Esophagus muscularis mucosa (tissue), 4 donors: ENCODE measurements at regions of chr5 and their contacts with region 1.

Region 1: DNA sequence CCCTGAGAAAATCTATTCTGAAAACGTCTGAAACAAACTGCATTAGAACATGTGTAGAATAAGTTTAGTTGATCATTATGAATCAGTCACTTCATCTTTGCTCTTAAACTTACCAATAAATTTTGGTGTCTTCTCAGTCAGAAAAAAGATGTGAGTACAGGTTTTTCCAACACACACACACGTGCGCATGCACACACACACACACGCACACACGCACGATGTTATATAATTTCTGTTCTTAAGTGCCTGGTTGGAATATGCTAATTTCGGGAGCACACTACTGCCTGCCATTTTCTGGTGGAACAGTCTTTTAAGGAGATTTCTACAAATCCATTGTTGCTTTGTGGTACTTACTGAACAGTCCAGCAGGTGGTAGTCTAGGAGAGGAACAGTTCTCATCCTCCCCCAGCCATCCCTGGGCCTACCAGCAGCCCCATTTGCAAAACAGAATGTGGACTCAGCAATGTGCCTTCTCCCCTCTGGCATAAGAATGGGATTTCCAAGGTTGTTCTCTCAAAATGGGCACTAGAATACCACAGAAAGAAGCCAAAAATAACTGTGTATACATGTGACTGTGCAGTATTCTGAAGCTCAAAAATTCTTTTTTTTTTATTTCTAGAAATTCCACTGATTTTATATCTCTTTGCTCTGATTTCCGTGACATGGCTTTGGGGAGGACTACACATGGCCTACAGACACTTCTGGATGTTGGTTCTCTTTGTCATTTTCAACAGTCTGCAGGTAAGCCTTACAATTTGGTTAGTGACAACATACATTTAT is 281.3 kb downstream of the ARRDC3 start:
- DNase-seq: no peak
- H3K4me3 ChIP-seq: no peak overlapping the region
- H3K27ac ChIP-seq: no peak overlapping the region
- H3K4me1 ChIP-seq: peaks cover 0 to 32% (median 25%) of the 10 kb centered on the region in 4 donors
- H3K27me3 ChIP-seq: no peaks in the 10 kb centered on the region
- CTCF ChIP-seq: peak; percentile 84 to 90 (median 84)
- EP300 ChIP-seq: no peak
- POLR2A ChIP-seq: no peak

Region 2: DNA sequence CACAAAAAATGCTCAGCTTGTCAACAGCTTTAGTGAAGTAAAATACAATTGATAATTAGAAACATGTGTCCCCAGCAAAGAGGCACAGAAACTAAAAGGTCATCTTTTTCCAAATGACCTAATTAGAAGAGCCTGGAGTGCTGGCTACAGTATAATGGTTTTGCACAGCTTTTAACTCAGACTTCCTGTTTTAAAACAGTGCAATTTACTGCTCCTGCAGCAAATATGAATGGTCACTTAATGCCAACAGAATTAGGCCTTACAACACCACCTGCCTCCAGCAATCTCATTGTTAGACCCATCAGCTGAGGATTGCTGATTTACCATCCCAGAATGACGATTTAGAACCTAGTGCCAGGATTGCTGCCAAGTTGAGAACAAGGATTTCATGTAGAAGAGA is 931.5 kb before region 1 on chr5:
- intact Hi-C with region 1: no loop called
- DNase-seq: no peak
- H3K4me3 ChIP-seq: no peak overlapping the region
- H3K27ac ChIP-seq: no peak overlapping the region
- H3K4me1 ChIP-seq: peaks cover 8 to 24% (median 13%) of the 10 kb centered on the region in 4 donors
- H3K27me3 ChIP-seq: no peaks in the 10 kb centered on the region
- CTCF ChIP-seq: no peak
- EP300 ChIP-seq: no peak
- POLR2A ChIP-seq: no peak

Region 3: DNA sequence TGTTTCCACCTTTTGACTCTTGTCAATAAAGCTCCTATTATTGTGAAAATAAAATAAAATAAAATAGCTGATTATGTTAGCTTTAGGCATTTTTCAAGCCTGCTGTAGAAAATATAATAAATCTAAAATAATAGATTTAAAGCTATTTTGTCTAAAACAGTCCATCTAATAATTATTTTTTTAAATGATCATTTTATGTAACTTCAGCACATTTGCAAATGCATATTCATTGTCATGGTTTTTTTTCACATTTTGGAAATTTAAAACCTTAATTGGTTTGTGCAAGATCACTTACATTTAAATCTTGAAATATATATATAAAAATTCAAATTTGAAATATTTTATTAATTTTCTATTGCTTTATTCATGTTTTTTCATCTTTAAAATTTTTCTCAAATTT is 383.4 kb before region 1 on chr5:
- intact Hi-C with region 1: no loop called
- DNase-seq: no peak
- H3K4me3 ChIP-seq: no peak overlapping the region
- H3K27ac ChIP-seq: no peak overlapping the region
- H3K4me1 ChIP-seq: no peaks in the 10 kb centered on the region
- H3K27me3 ChIP-seq: no peaks in the 10 kb centered on the region
- CTCF ChIP-seq: no peak
- EP300 ChIP-seq: no peak
- POLR2A ChIP-seq: no peak

Region 4: DNA sequence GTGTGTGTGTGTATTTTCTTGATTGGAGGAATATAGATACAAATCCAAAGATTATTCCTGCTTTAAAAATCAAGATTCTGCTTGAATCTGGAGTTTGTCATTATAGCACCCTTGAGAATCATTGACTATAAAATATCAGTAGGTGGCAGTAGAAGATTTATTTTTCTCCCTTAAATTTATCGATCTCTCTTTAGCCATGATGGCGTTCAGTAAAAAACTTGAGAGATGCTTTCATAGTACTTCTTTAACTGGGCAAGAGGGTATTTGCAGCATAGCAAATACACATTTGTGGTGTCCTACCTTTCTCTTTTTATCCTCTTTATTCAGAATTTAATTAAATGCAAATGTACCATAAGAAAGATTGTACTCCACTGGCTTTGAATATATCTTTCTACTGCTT is 235.5 kb before region 1 on chr5:
- intact Hi-C with region 1: loop called (anchors 10 kb)
- DNase-seq: no peak
- H3K4me3 ChIP-seq: no peak overlapping the region
- H3K27ac ChIP-seq: no peak overlapping the region
- H3K4me1 ChIP-seq: peaks cover 0 to 6% (median 1%) of the 10 kb centered on the region in 4 donors
- H3K27me3 ChIP-seq: peaks cover 0 to 4% (median 0%) of the 10 kb centered on the region in 4 donors
- CTCF ChIP-seq: peak; percentile 50 to 57 (median 56)
- EP300 ChIP-seq: no peak
- POLR2A ChIP-seq: no peak

Region 5: DNA sequence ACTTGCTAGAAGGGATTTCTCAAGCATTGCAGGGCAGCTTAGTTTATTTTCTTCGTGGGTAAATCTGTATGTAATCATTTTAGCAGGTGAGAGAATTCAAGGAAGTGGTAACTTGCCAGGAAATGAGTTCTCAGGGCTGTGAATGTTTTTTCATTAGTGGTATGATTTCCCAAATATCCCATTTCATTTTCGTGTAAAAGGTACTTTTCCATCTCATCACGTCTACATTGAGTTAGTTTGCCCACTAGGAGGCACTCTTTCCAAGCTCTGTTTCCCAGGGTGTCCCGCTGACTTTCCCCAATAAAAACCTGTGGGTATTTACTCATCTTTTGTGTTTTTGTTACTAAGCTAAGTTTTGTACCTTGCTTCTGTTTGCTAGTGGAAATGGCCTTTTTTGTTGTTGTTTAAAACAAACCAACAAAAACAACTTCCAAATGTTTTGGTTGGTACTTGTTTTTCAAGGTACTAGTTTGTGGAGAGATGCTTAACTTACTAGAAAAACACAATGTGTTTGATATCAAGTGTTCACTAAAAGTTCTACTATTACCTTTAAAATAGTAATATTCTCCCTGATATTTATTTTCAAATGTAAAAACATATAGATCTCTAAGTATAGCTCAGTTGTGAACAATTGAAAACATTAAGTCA is 169.6 kb before region 1 on chr5:
- intact Hi-C with region 1: loop called (anchors 2 kb)
- DNase-seq: no peak
- H3K4me3 ChIP-seq: no peak overlapping the region
- H3K27ac ChIP-seq: no peak overlapping the region
- H3K4me1 ChIP-seq: peaks cover 0 to 22% (median 11%) of the 10 kb centered on the region in 4 donors
- H3K27me3 ChIP-seq: no peaks in the 10 kb centered on the region
- CTCF ChIP-seq: peak; percentile 77 to 82 (median 80)
- EP300 ChIP-seq: no peak
- POLR2A ChIP-seq: no peak

Region 6: DNA sequence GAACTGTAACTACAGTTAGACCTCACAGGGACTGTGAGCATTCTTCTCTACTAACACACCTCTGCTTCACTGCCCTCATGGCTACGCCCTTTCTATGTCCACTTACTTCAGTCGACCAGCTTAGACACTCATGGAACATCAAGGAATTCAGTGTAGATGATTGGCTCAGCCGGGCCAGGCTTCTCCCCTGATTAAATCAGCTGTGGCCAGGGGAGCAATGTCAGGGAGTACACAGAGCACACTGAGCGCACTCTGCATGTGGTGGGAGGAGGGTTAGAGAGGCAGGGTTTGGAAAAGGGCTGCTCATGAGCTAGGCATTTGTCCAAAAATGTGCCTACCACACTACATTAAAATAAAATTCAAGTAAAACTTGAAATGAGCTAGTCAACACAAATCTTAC is 119.2 kb before region 1 on chr5:
- intact Hi-C with region 1: no loop called
- DNase-seq: no peak
- H3K4me3 ChIP-seq: no peak overlapping the region
- H3K27ac ChIP-seq: no peak overlapping the region
- H3K4me1 ChIP-seq: no peaks in the 10 kb centered on the region
- H3K27me3 ChIP-seq: no peaks in the 10 kb centered on the region
- CTCF ChIP-seq: no peak
- EP300 ChIP-seq: no peak
- POLR2A ChIP-seq: no peak

Region 7: GRCh38 chr5:91280362-91281269 is 178.8 kb after region 1 on chr5:
- intact Hi-C with region 1: loop called (anchors 10 kb)
- DNase-seq: peak; percentile 97
- H3K4me3 ChIP-seq: peak overlapping the region; percentile 61 to 71 (median 65)
- H3K27ac ChIP-seq: peak overlapping the region; percentile 89 to 95 (median 92)
- H3K4me1 ChIP-seq: peaks cover 3 to 46% (median 36%) of the 10 kb centered on the region in 4 donors
- H3K27me3 ChIP-seq: no peaks in the 10 kb centered on the region
- CTCF ChIP-seq: no peak
- EP300 ChIP-seq: peak; percentile 47
- POLR2A ChIP-seq: peak; percentile 57

Region 8: DNA sequence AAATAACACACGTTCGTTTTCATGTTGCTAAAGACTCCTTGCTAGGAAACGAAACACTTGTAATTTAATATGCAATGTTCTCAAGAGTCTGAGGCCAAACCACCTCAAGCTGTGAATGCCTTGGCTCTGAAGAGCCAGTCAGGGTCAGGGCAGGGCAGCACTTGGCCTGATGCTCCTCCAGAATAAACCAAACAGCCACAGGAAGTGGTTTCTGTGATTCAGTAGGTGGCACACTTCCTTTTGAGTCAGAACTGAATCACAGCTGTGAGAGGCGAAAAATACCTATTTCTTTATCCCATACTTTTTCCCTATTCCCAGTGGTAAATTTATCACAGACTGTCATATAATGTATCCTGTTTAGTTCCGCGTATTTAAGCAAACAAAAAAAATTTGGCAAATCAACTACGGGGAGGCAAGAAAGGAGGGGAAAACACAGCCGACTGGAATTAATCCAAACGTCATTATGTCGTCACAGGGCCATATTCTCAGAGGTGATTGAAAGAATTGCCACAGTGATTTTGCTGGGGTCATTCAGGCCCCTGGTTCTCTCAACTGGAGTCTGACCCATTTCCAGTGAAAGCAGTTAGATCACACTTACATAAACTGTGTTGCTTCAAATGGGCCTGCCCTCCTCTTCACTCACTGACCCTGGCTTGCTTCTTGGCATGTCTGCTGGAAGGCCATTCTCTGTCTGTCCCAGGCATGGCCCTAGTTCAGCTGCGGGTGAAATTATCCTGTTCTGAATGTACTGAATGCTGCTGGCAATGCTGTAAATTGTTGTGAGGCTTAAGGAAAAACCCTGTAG is 210.1 kb after region 1 on chr5:
- intact Hi-C with region 1: loop called (anchors 5 kb)
- DNase-seq: peak; percentile 95
- H3K4me3 ChIP-seq: no peak overlapping the region
- H3K27ac ChIP-seq: peak overlapping the region; percentile 76 to 81 (median 79)
- H3K4me1 ChIP-seq: peaks cover 39 to 47% (median 41%) of the 10 kb centered on the region in 4 donors
- H3K27me3 ChIP-seq: no peaks in the 10 kb centered on the region
- CTCF ChIP-seq: peak in 1 of 3 experiments; percentile 12
- EP300 ChIP-seq: no peak
- POLR2A ChIP-seq: no peak